T-cell (primary cell): ENCODE measurements at regions of chr6 and their contacts with region 1.

Region 1: DNA sequence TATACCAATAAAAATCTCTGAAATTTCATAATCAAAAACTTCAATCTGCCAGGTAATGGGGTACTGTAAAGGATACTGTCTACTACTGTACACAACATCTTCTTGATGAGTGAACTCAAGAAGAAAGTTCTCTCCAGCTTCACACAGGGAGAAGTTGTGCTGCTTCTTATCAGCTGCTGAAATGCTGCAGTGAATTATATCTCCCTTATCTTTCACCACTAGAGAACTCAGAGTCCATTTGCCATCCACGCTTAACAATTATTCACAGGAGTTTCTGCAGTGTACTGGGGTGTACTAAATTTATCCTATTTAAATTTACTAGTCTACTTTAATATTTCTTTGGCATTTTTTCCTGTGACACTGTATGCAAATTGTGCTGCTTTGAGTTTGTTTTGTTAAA is 384.8 kb downstream of the TFAP2B start:
- DNase-seq: no peak
- ATAC-seq: no peak
- H3K4me3 ChIP-seq: no peak overlapping the region
- H3K4me3 Mint-ChIP-seq: no peak overlapping the region
- H3K27ac ChIP-seq: no peak overlapping the region
- H3K27ac Mint-ChIP-seq: no peak overlapping the region
- H3K4me1 ChIP-seq: no peaks in the 10 kb centered on the region
- H3K4me1 Mint-ChIP-seq: no peaks in the 10 kb centered on the region
- H3K27me3 ChIP-seq: no peaks in the 10 kb centered on the region
- H3K27me3 Mint-ChIP-seq: no peaks in the 10 kb centered on the region

Region 2: GRCh38 chr6:49513153-49513989 is 1690.1 kb before region 1 on chr6:
- CTCF ChIA-PET with region 1: no interaction called
- POLR2A ChIA-PET with region 1: interaction called in 1 of 2 experiments, 11 read pairs
- DNase-seq: no peak
- ATAC-seq: no peak
- H3K4me3 ChIP-seq: no peak overlapping the region
- H3K4me3 Mint-ChIP-seq: no peak overlapping the region
- H3K27ac ChIP-seq: no peak overlapping the region
- H3K27ac Mint-ChIP-seq: no peak overlapping the region
- H3K4me1 ChIP-seq: no peaks in the 10 kb centered on the region
- H3K4me1 Mint-ChIP-seq: no peaks in the 10 kb centered on the region
- H3K27me3 ChIP-seq: no peaks in the 10 kb centered on the region
- H3K27me3 Mint-ChIP-seq: peaks cover 13% of the 10 kb centered on the region in 2 donors

Region 3: DNA sequence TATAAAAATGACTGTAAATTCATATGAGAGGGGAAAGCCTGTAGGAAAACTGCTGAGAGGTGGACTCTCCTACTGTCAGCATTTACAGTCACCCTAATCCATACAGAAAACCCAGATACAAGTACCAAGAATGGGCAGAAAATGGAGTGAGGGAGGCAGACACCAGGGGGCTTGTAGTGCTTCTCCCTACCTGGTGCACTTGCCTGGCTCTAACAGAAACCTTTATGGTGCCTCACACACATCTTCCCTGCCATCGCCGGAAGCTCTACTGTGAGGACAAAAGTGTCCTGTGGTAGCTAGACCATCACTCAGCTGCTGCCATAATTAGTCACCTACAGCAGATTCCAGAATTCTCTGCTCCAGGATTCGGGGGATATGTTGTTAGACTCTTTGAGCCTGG is 56.5 kb after region 1 on chr6:
- CTCF ChIA-PET with region 1: no interaction called
- POLR2A ChIA-PET with region 1: no interaction called
- DNase-seq: no peak
- ATAC-seq: no peak
- H3K4me3 ChIP-seq: no peak overlapping the region
- H3K4me3 Mint-ChIP-seq: no peak overlapping the region
- H3K27ac ChIP-seq: no peak overlapping the region
- H3K27ac Mint-ChIP-seq: no peak overlapping the region
- H3K4me1 ChIP-seq: no peaks in the 10 kb centered on the region
- H3K4me1 Mint-ChIP-seq: no peaks in the 10 kb centered on the region
- H3K27me3 ChIP-seq: no peaks in the 10 kb centered on the region
- H3K27me3 Mint-ChIP-seq: no peaks in the 10 kb centered on the region